ENCODE measurements at regions of chr7 and their contacts with region 1.

Region 1: DNA sequence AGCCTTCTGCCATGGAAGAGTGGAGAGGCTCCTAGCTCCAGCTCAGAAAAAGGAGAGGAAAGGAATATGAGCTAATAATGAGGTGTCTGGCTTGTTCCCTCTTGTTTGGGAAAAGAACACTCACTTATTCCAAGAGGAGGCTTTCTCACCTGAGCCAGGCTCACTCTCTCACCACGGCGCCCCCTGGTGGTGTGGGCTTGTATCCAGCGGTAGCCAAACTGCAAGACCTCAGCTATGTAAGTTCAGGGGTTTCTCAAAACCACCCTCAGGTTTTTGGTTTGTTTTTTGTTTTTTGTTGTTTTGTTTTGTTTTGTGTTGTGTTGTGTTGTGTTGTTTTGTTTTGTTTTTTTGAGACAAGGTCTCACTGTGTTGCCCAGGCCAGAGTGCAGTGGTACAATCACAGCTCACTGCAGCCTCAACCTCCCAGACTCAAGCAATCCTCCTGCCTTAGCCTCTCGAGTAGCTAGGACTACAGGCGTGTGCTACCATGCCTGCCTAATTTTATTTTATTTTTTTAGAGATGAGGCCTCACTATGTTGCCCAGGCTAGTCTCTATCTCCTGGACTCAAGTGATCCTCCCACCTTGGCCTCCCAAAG is 124.0 kb downstream of the TMEM130 start:
- DNase-seq: peak; percentile 58 to 70
- H3K4me3 ChIP-seq: no peak overlapping the region
- H3K27ac ChIP-seq: no peak overlapping the region
- H3K4me1 ChIP-seq: no peaks in the 10 kb centered on the region
- H3K27me3 ChIP-seq: no peaks in the 10 kb centered on the region
- CTCF ChIP-seq: peak; percentile 39 to 62 (median 46)
- POLR2A ChIP-seq: no peak

Region 2: DNA sequence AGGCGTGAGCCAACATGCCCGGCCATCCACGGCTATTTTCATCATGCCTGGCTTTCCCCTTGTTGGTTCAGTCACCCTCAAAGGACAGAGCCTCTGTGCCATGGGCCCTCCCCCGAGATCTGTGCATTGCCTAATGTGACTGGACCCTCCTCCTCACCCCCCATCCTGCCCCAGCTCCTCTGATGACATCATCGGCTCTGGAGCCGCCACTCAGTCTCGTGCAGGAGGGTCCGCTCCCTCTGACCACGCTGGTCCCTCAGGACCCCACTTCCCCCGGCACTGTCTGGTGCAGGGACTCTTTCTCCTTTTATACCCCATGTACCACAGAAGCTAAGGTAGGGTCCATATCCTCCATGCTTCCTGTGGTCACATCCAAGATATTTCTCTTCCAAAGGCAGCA is 311.7 kb before region 1 on chr7:
- intact Hi-C with region 1: loop called (anchors 10 kb)
- DNase-seq: no peak
- H3K4me3 ChIP-seq: no peak overlapping the region
- H3K27ac ChIP-seq: no peak overlapping the region
- H3K4me1 ChIP-seq: no peaks in the 10 kb centered on the region
- H3K27me3 ChIP-seq: no peaks in the 10 kb centered on the region
- CTCF ChIP-seq: no peak
- POLR2A ChIP-seq: no peak